Activated CD4-positive, alpha-beta T cell treated with anti-CD3 and anti-CD28 coated beads for 36 hours (primary cell): ENCODE measurements at regions of chr4 and their contacts with region 1.

Region 1: GRCh38 chr4:152485726-152486276 is 50.1 kb downstream of the FBXW7 start:
- DNase-seq: peak; percentile 25
- ATAC-seq: peak; percentile 100
- H3K4me3 Mint-ChIP-seq: no peak overlapping the region
- H3K27ac Mint-ChIP-seq: no peak overlapping the region
- H3K4me1 Mint-ChIP-seq: peaks cover 43% of the 10 kb centered on the region
- H3K27me3 Mint-ChIP-seq: no peaks in the 10 kb centered on the region

Region 2: GRCh38 chr4:151015459-151016347 is 1470.1 kb before region 1 on chr4:
- CTCF ChIA-PET with region 1: no interaction called
- POLR2A ChIA-PET with region 1: no interaction called
- intact Hi-C with region 1: loop called in 1 of 2 experiments (anchors 10 kb)
- DNase-seq: peak; percentile 89
- ATAC-seq: peak; percentile 81
- H3K4me3 Mint-ChIP-seq: peak overlapping the region; percentile 90
- H3K27ac Mint-ChIP-seq: peak overlapping the region; percentile 99
- H3K4me1 Mint-ChIP-seq: peaks cover 24% of the 10 kb centered on the region
- H3K27me3 Mint-ChIP-seq: no peaks in the 10 kb centered on the region

Region 3: DNA sequence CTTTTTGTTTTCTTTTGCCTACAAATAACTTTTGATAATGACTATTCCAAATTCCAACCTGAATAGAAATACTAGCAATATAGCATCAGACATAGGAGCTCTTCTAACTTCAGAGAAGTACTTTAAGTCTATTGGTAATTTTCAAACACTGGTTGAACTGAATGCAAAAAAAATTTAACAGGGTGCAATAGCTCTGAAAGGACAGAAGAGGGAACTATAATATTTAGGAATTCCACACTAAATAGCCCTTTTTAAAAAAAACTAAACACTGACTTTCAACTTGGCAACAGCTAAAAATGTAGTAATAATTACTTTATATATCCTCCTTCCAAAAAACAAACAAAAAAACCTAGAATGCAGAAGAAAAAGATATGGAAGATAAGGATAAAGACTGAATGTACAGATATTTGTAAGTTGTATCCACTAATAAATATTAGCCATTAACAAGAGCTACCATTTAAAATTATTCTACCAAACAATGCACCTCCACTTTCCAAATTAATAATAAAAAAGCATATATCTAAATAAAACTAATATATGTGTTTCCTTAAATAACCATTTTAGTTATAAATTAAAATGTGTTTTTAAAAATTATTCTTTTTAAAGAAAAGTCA is 31.3 kb before region 1 on chr4:
- CTCF ChIA-PET with region 1: interaction called, 5 read pairs
- POLR2A ChIA-PET with region 1: no interaction called
- intact Hi-C with region 1: loop called in 1 of 2 experiments (anchors 2 kb)
- DNase-seq: no peak
- ATAC-seq: no peak
- H3K4me3 Mint-ChIP-seq: no peak overlapping the region
- H3K27ac Mint-ChIP-seq: no peak overlapping the region
- H3K4me1 Mint-ChIP-seq: peaks cover 34% of the 10 kb centered on the region
- H3K27me3 Mint-ChIP-seq: no peaks in the 10 kb centered on the region

Region 4: DNA sequence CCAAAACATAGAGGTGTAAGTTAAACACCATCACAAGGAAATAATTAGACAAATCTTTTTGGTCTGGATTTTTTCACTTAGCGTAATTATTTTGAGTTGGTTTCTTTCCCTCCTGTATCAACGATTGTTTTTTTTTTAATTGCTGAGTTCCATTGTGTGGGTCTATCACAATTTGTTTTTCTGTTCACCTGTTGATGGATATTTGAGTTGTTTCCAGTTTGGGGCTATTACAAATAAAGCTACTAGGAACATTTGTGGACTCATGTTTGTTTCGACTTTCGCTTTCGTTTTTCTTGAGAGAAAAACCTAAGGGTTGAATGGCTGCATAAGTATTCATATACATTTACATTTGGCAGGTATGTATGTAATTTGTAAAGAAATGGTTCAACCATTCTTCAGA is 70.5 kb after region 1 on chr4:
- CTCF ChIA-PET with region 1: no interaction called
- POLR2A ChIA-PET with region 1: no interaction called
- intact Hi-C with region 1: loop called in 1 of 2 experiments (anchors 2 kb)
- DNase-seq: no peak
- ATAC-seq: no peak
- H3K4me3 Mint-ChIP-seq: peak overlapping the region; percentile 27
- H3K27ac Mint-ChIP-seq: peak overlapping the region; percentile 53
- H3K4me1 Mint-ChIP-seq: peaks cover 55% of the 10 kb centered on the region
- H3K27me3 Mint-ChIP-seq: no peaks in the 10 kb centered on the region

Region 5: DNA sequence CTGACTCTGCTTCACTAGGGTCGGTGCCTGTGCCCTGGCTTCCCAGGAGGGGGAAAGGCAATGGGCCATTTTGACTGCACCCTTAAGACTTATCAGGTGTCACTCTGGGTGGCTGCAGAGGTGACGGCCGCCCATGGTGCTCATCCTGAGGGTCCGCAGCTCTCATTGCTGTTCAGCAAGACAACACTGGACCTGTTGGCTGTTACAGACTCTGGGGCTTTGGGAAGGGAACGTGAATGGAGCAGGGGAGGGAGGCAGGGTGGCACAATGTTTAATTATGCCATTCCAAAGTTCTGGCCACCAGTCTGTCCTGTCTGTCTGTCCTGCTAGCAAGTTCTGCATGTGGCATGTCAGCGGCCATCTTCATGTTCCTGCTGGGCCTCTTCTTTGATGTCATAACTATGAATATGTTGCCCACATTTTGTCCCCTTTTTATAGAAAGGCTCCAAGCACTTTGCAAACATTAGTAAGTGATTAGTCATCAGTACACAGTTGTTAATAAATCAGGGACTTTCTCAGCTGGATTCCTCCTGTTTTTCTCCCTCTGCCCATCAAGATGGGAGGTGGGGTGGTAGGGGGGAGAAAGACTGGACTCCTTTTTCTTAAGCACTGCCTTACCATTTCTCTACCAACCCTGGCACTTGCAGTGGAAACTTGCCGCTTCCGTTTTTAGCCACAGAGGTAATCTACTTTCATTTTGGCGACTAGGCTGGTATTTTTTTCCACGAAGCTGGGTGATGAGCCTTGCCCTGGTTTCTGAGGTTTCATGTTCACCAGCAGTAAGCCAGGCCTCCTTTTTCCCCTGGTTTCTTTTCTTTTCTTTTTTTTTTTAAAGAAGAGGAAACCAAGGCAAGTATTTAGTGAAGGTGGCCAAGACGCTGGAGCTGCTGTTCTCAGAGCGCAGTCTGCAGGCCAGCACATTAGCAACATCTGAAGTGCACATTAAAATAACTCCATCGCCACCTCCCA is 629.8 kb after region 1 on chr4:
- CTCF ChIA-PET with region 1: no interaction called
- POLR2A ChIA-PET with region 1: no interaction called
- intact Hi-C with region 1: loop called in 1 of 2 experiments (anchors 10 kb)
- DNase-seq: peak; percentile 87
- ATAC-seq: peak; percentile 59
- H3K4me3 Mint-ChIP-seq: no peak overlapping the region
- H3K27ac Mint-ChIP-seq: no peak overlapping the region
- H3K4me1 Mint-ChIP-seq: peaks cover 2% of the 10 kb centered on the region
- H3K27me3 Mint-ChIP-seq: no peaks in the 10 kb centered on the region